T-cell (primary cell): ENCODE measurements at regions of chr17 and their contacts with region 1.

Region 1: GRCh38 chr17:32486111-32486700 is 587 bp upstream of the CDK5R1 start:
- DNase-seq: peak in 34 of 35 experiments; percentile 41 to 89 (median 63)
- ATAC-seq: peak; percentile 80 to 83 (median 81)
- H3K4me3 ChIP-seq: peak overlapping the region; percentile 19 to 34
- H3K4me3 Mint-ChIP-seq: peak overlapping the region; percentile 65 to 81 (median 77)
- H3K27ac ChIP-seq: peak overlapping the region; percentile 20
- H3K27ac Mint-ChIP-seq: peak overlapping the region; percentile 74 to 77
- H3K4me1 ChIP-seq: peaks cover 6 to 44% of the 10 kb centered on the region in 2 experiments
- H3K4me1 Mint-ChIP-seq: peaks cover 49 to 51% (median 51%) of the 10 kb centered on the region in 3 donors
- H3K27me3 ChIP-seq: no peaks in the 10 kb centered on the region
- H3K27me3 Mint-ChIP-seq: no peaks in the 10 kb centered on the region

Region 2: GRCh38 chr17:32117399-32117798 is 368.8 kb before region 1 on chr17:
- CTCF ChIA-PET with region 1: no interaction called
- POLR2A ChIA-PET with region 1: no interaction called
- DNase-seq: no peak
- ATAC-seq: no peak
- H3K4me3 ChIP-seq: no peak overlapping the region
- H3K4me3 Mint-ChIP-seq: no peak overlapping the region
- H3K27ac ChIP-seq: no peak overlapping the region
- H3K27ac Mint-ChIP-seq: no peak overlapping the region
- H3K4me1 ChIP-seq: peaks cover 2 to 9% of the 10 kb centered on the region in 2 experiments
- H3K4me1 Mint-ChIP-seq: peaks cover 9 to 15% (median 10%) of the 10 kb centered on the region in 3 donors
- H3K27me3 ChIP-seq: peaks cover 0 to 29% of the 10 kb centered on the region in 2 experiments
- H3K27me3 Mint-ChIP-seq: peaks cover 0 to 13% of the 10 kb centered on the region in 2 donors

Region 3: GRCh38 chr17:32444308-32445073 is 41.7 kb before region 1 on chr17 and contains the start of gene PSMD11:
- CTCF ChIA-PET with region 1: interaction called, 3 to 12 read pairs
- POLR2A ChIA-PET with region 1: interaction called in 1 of 2 experiments, 3 read pairs
- DNase-seq: peak; percentile 97 to 99 (median 99)
- ATAC-seq: peak; percentile 97 to 98 (median 98)
- H3K4me3 ChIP-seq: peak within 1 kb of the TSS; percentile 82 to 94
- H3K4me3 Mint-ChIP-seq: peak within 1 kb of the TSS; percentile 87 to 93 (median 90)
- H3K27ac ChIP-seq: peak within 1 kb of the TSS; percentile 56
- H3K27ac Mint-ChIP-seq: peak within 1 kb of the TSS; percentile 75 to 81
- H3K4me1 ChIP-seq: peaks cover 12 to 21% of the 10 kb centered on the region in 2 experiments
- H3K4me1 Mint-ChIP-seq: peaks cover 31 to 42% (median 37%) of the 10 kb centered on the region in 3 donors
- H3K27me3 ChIP-seq: no peaks in the 10 kb centered on the region
- H3K27me3 Mint-ChIP-seq: no peaks in the 10 kb centered on the region
- total RNA-seq, gene PSMD11: 56.3 to 72.8 (median 62.9) TPM

Region 4: GRCh38 chr17:32523017-32523680 is 36.9 kb after region 1 on chr17:
- CTCF ChIA-PET with region 1: interaction called, 4 to 11 read pairs
- POLR2A ChIA-PET with region 1: no interaction called
- DNase-seq: peak in 6 of 35 experiments; percentile 10 to 71 (median 13)
- ATAC-seq: no peak
- H3K4me3 ChIP-seq: no peak overlapping the region
- H3K4me3 Mint-ChIP-seq: peak overlapping the region in 2 of 3 donors; percentile 37 to 66
- H3K27ac ChIP-seq: peak overlapping the region; percentile 39
- H3K27ac Mint-ChIP-seq: peak overlapping the region in 1 of 2 donors; percentile 13
- H3K4me1 ChIP-seq: peaks cover 10 to 68% of the 10 kb centered on the region in 2 experiments
- H3K4me1 Mint-ChIP-seq: peaks cover 49 to 70% (median 50%) of the 10 kb centered on the region in 3 donors
- H3K27me3 ChIP-seq: no peaks in the 10 kb centered on the region
- H3K27me3 Mint-ChIP-seq: no peaks in the 10 kb centered on the region

Region 5: DNA sequence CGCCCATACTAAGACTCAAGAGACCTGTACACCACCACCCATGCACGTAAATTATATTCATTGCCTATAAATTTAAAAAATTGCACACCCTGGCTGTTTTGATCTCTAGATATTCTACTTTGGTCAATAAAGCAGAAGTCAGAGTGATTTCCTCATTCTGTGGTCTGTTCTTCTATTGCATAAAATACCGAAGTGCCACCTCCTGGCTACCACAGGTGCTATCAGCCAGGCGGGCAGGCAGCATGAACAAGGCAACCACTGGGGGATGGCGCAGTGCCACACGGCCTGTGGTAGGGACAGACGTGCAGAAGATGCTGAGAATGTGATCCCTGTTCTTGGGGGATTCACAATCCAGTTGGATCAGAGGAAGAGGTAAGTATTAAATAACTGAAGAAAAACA is 122.9 kb after region 1 on chr17:
- CTCF ChIA-PET with region 1: interaction called, 7 to 10 read pairs
- POLR2A ChIA-PET with region 1: interaction called in 1 of 2 experiments, 7 read pairs
- DNase-seq: peak; percentile 54 to 83 (median 73)
- ATAC-seq: peak; percentile 100
- H3K4me3 ChIP-seq: no peak overlapping the region
- H3K4me3 Mint-ChIP-seq: no peak overlapping the region
- H3K27ac ChIP-seq: no peak overlapping the region
- H3K27ac Mint-ChIP-seq: no peak overlapping the region
- H3K4me1 ChIP-seq: no peaks in the 10 kb centered on the region
- H3K4me1 Mint-ChIP-seq: peaks cover 6 to 9% (median 6%) of the 10 kb centered on the region in 3 donors
- H3K27me3 ChIP-seq: no peaks in the 10 kb centered on the region
- H3K27me3 Mint-ChIP-seq: peaks cover 0 to 2% of the 10 kb centered on the region in 2 donors

Region 6: DNA sequence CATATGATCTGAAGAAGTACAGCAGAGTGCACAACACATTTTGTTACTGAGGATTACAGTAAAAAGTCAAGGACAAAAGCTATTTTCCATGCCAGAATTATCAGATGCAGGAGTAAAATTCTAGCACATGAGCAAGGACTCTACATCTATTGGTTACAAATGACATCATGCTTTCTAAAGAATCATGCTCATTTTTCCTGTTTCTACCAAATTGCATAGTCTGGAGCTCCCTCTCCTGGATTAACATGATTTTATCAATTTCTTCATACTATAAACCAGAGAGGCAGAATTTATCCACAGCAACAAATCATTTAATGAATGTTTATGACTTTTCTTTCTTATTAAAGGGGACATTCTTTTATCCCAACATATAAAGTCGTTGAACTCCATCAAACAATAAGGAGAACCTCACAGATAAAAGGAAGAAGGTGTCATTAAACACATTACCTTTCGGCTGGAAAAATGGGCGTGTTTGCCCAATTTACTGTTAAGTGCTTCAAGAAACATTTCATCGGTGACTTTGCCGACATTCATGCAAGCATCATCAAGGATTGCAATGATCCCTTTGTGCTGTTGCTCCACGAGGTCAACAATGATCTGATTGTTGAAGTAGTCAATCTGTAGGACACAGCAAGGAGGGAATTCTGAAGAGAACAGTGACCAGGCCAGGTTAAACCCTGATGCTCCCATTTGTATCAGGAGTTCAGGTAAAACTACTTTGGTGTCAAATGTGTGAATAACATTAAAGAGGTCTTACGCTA is 269.0 kb after region 1 on chr17:
- CTCF ChIA-PET with region 1: interaction called in 1 of 2 experiments, 20 read pairs
- POLR2A ChIA-PET with region 1: no interaction called
- DNase-seq: peak in 2 of 35 experiments; percentile 4 to 70
- ATAC-seq: peak; percentile 61 to 84 (median 74)
- H3K4me3 ChIP-seq: no peak overlapping the region
- H3K4me3 Mint-ChIP-seq: no peak overlapping the region
- H3K27ac ChIP-seq: no peak overlapping the region
- H3K27ac Mint-ChIP-seq: no peak overlapping the region
- H3K4me1 ChIP-seq: peaks cover 0 to 2% of the 10 kb centered on the region in 2 experiments
- H3K4me1 Mint-ChIP-seq: peaks cover 12 to 15% (median 13%) of the 10 kb centered on the region in 3 donors
- H3K27me3 ChIP-seq: no peaks in the 10 kb centered on the region
- H3K27me3 Mint-ChIP-seq: no peaks in the 10 kb centered on the region

Region 7: DNA sequence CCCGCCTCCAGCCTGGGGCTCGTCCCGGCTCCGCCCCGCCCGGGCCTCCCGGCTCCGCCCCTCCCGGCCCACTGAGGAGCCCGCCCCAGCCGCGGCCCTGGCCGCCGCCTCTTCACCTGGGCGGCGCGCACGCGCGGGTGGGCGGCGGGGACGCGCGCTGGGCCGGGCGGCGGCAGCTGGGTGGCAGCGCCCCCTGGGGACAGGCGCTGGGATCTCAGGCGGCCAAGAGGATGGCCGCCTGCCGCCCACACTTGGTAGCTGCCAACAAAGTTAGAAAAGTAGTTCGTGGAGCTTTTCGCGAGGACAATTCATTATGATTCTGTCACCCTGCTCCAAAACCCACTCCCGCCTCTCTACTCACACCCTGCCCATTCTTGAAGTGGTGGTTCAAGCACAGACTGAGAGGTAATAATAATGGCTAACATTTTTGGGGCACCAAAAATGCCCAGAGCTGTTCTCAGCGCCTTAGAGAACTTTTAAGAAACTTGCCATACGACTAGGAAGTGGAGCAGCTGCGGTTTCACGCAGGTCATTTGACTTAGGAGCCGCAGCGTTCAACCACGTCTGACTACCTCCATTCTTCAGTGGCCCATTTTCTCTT is 391.1 kb after region 1 on chr17:
- CTCF ChIA-PET with region 1: interaction called in 1 of 2 experiments, 13 read pairs
- POLR2A ChIA-PET with region 1: no interaction called
- DNase-seq: peak; percentile 82 to 98 (median 90)
- ATAC-seq: peak; percentile 95 to 97 (median 96)
- H3K4me3 ChIP-seq: peak overlapping the region; percentile 35 to 45
- H3K4me3 Mint-ChIP-seq: peak overlapping the region; percentile 72 to 75 (median 74)
- H3K27ac ChIP-seq: peak overlapping the region; percentile 68
- H3K27ac Mint-ChIP-seq: peak overlapping the region; percentile 87 to 92
- H3K4me1 ChIP-seq: peaks cover 5 to 13% of the 10 kb centered on the region in 2 experiments
- H3K4me1 Mint-ChIP-seq: peaks cover 13 to 15% (median 15%) of the 10 kb centered on the region in 3 donors
- H3K27me3 ChIP-seq: no peaks in the 10 kb centered on the region
- H3K27me3 Mint-ChIP-seq: peaks cover 5 to 6% of the 10 kb centered on the region in 2 donors